KBM-7 (cell line): ENCODE measurements at regions of chr7 and their contacts with region 1.

Region 1: GRCh38 chr7:73738612-73739374 is at the start of gene ABHD11:
- DNase-seq: peak; percentile 94

Region 2: DNA sequence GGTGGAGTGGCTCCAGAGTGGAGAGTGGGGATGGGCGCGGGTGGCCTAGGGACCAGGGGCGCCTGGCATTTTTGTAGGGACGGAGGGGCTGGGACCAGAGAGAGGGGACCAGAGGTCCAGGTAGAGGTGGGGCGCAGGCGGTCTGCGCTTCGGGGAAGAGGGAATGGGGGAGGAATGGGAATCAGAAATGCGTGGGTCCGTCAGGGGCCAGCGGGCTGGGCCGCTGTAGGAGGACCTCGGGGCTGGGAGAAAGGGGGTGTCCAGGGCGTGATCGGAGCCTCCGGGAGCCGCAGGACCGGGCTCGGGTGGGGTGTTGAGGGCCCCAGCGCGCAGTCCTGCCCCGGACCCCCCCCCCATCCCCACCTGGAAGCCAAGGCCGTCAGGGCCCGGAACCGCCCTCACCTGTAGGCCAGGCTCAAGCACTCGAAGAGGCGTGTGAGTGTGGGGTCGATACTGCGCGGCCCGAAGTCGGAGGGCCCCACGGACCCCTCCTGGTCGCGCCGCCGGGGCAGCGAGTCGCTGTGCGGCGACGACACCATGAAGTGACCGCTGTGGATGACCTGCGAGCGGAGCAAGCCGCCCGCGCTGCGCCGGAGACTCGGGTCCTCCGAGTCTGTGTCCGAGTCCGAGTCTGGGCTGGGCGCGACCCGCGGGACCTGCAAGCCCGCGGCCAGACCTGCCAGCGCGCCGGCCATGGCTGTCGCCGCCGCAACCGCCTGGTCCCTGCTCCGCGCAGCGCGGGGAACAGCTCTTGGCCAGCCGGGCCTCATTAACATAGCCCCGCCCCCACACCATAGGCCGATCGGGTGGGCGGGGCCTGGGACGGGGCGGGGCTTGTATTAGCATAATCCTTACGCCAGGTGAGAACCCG is 114.8 kb before region 1 on chr7 and contains the start of gene MLXIPL:
- in situ Hi-C with region 1: loop called (anchors 10 kb)
- DNase-seq: no peak